B cell (primary cell): ENCODE measurements at regions of chr13 and their contacts with region 1.

Region 1: GRCh38 chr13:94549232-94550061 is 46.5 kb downstream of the TGDS start:
- DNase-seq: peak; percentile 96
- ATAC-seq: peak; percentile 86
- H3K4me3 ChIP-seq: peak overlapping the region; percentile 64 to 87 (median 77)
- H3K4me3 Mint-ChIP-seq: peak overlapping the region; percentile 96
- H3K27ac ChIP-seq: peak overlapping the region; percentile 87 to 89
- H3K27ac Mint-ChIP-seq: peak overlapping the region; percentile 98
- H3K4me1 ChIP-seq: peaks cover 13 to 23% of the 10 kb centered on the region in 2 donors
- H3K4me1 Mint-ChIP-seq: peaks cover 28% of the 10 kb centered on the region
- H3K27me3 ChIP-seq: no peaks in the 10 kb centered on the region
- H3K27me3 Mint-ChIP-seq: peaks cover 4% of the 10 kb centered on the region
- CTCF ChIP-seq: peak; percentile 10

Region 2: DNA sequence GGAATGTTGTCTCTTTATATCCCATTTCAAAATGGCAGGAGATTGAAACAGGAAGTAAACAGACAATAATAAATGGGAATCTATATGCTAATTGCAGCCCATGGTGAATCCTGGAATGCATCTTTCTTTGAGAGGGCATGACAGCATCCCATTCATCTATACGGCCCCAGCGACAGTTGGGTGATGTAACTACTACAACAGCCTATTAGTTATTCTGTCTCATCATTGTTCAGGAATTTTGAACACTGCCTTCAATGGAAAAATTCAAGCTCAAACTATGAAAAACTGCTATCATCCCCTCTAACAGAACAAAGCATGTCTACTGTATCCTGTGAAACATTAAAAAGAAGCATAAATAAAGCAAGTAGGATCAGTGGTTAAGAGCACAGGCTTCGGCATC is 332.1 kb before region 1 on chr13:
- CTCF ChIA-PET with region 1: no interaction called
- POLR2A ChIA-PET with region 1: no interaction called
- intact Hi-C with region 1: no loop called
- DNase-seq: no peak
- ATAC-seq: no peak
- H3K4me3 ChIP-seq: no peak overlapping the region
- H3K4me3 Mint-ChIP-seq: no peak overlapping the region
- H3K27ac ChIP-seq: no peak overlapping the region
- H3K27ac Mint-ChIP-seq: no peak overlapping the region
- H3K4me1 ChIP-seq: no peaks in the 10 kb centered on the region
- H3K4me1 Mint-ChIP-seq: no peaks in the 10 kb centered on the region
- H3K27me3 ChIP-seq: no peaks in the 10 kb centered on the region
- H3K27me3 Mint-ChIP-seq: no peaks in the 10 kb centered on the region
- CTCF ChIP-seq: no peak

Region 3: GRCh38 chr13:94595950-94596574 is 46.6 kb after region 1 on chr13 and contains the start of gene TGDS:
- CTCF ChIA-PET with region 1: interaction called, 10 read pairs
- POLR2A ChIA-PET with region 1: interaction called, 32 read pairs
- intact Hi-C with region 1: loop called (anchors 1 kb)
- DNase-seq: peak; percentile 93
- ATAC-seq: peak; percentile 97
- H3K4me3 ChIP-seq: peak within 1 kb of the TSS; percentile 88 to 99 (median 98)
- H3K4me3 Mint-ChIP-seq: peak within 1 kb of the TSS; percentile 89
- H3K27ac ChIP-seq: peak within 1 kb of the TSS; percentile 70 to 71
- H3K27ac Mint-ChIP-seq: peak within 1 kb of the TSS; percentile 90
- H3K4me1 ChIP-seq: peaks cover 19 to 25% of the 10 kb centered on the region in 2 donors
- H3K4me1 Mint-ChIP-seq: peaks cover 35% of the 10 kb centered on the region
- H3K27me3 ChIP-seq: no peaks in the 10 kb centered on the region
- H3K27me3 Mint-ChIP-seq: no peaks in the 10 kb centered on the region
- CTCF ChIP-seq: no peak
- total RNA-seq, gene TGDS: 12.1 and 14.7 TPM in 2 replicates

Region 4: GRCh38 chr13:94776956-94777355 is 227.5 kb after region 1 on chr13:
- CTCF ChIA-PET with region 1: no interaction called
- POLR2A ChIA-PET with region 1: no interaction called
- intact Hi-C with region 1: no loop called
- DNase-seq: no peak
- ATAC-seq: no peak
- H3K4me3 ChIP-seq: no peak overlapping the region
- H3K4me3 Mint-ChIP-seq: no peak overlapping the region
- H3K27ac ChIP-seq: no peak overlapping the region
- H3K27ac Mint-ChIP-seq: no peak overlapping the region
- H3K4me1 ChIP-seq: no peaks in the 10 kb centered on the region
- H3K4me1 Mint-ChIP-seq: no peaks in the 10 kb centered on the region
- H3K27me3 ChIP-seq: no peaks in the 10 kb centered on the region
- H3K27me3 Mint-ChIP-seq: no peaks in the 10 kb centered on the region
- CTCF ChIP-seq: no peak